AG04450 (cell line): ENCODE measurements at regions of chr1 and their contacts with region 1.

Region 1: DNA sequence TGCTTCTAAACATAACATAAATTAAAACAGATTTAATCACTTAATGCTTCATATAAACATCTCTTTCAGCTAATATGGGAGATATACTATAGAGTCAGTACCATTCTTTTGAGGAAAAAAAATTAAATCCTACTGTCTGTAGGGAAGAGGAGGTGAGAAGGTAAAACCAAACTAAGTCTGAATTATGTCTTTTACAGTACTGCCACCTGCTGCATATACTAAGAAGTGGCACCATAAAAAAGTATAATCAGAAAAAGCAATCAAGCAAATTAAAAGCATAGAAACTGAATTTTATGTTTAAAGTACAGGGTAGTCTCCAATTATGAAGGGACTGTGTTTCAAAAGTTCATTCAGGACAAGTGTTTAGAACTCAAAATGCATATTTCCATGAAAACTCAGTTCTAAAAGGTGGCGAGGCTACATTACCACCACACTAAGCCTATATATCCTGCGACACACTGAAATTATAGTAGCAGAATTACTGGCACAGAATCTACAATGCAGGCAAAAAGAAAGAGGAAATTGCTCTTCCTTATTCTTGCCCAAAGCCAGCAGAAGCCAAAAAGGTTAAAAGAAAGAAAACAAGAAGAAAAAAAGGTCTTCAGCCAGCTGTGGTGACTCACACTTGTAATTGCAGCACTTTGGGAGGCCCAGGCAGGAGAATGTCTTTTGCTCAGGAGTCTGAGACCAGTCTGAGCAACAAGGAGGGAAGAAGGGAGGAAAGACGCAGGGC is 9.0 kb downstream of the NSL1 start:
- DNase-seq: no peak
- H3K4me3 ChIP-seq: no peak overlapping the region
- H3K27ac ChIP-seq: no peak overlapping the region
- H3K27me3 ChIP-seq: no peaks in the 10 kb centered on the region
- CTCF ChIP-seq: peak; percentile 65

Region 2: GRCh38 chr1:212630158-212630900 is 152.3 kb before region 1 on chr1:
- CTCF ChIA-PET with region 1: interaction called, 11 read pairs
- POLR2A ChIA-PET with region 1: no interaction called
- DNase-seq: no peak
- H3K4me3 ChIP-seq: no peak overlapping the region
- H3K27ac ChIP-seq: no peak overlapping the region
- H3K27me3 ChIP-seq: peaks cover 28% of the 10 kb centered on the region
- CTCF ChIP-seq: peak; percentile 84

Region 3: GRCh38 chr1:213669964-213670691 is 887.5 kb after region 1 on chr1:
- CTCF ChIA-PET with region 1: no interaction called
- POLR2A ChIA-PET with region 1: no interaction called
- DNase-seq: no peak
- H3K4me3 ChIP-seq: no peak overlapping the region
- H3K27ac ChIP-seq: no peak overlapping the region
- H3K27me3 ChIP-seq: no peaks in the 10 kb centered on the region
- CTCF ChIP-seq: no peak